Vagina (tissue), 2 donors: ENCODE measurements at regions of chr1 and their contacts with region 1.

Region 1: GRCh38 chr1:24847995-24848881 is 81.8 kb downstream of the RUNX3 start:
- DNase-seq: peak in 1 of 2 donors; percentile 92
- H3K4me3 ChIP-seq: peak overlapping the region; percentile 47 to 57
- H3K27ac ChIP-seq: peak overlapping the region; percentile 71
- H3K4me1 ChIP-seq: peaks cover 18% of the 10 kb centered on the region
- H3K27me3 ChIP-seq: no peaks in the 10 kb centered on the region
- CTCF ChIP-seq: peak; percentile 91 to 95 (median 92)
- POLR2A ChIP-seq: peak in 1 of 2 donors; percentile 47

Region 2: DNA sequence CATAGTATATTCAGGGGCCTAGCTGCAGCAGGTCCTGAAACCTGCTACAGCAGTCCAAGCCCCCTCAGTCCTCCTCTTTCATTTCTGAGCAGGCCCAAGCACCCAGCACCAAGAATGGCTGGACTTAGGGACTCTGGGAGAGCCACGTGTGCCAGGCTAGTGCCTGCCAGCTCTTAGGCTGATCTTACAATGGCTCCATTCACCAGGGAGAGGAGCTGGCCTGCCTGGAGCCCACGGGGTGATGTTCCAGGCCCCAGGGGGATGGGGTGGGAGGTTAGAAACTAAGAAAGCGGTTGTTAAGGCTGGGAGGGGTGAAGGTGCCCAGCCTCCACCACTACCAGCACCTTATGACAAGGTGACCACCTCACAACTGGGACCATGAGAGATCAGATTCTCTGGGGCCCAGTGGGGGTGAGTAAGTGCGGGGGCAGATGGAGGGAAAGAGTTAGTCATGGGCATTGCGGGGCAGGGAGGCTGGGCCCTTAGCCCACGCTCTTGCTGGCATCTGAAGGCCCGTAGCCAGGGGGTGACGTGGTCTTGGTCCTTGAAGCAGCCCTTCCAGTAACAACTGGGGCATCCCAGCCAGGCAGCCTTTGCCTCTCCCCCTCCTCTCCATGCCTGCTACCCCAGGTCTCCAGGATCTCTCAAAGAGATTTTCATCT is 133.2 kb before region 1 on chr1:
- intact Hi-C with region 1: no loop called
- DNase-seq: no peak
- H3K4me3 ChIP-seq: no peak overlapping the region
- H3K27ac ChIP-seq: no peak overlapping the region
- H3K4me1 ChIP-seq: peaks cover 14% of the 10 kb centered on the region
- H3K27me3 ChIP-seq: no peaks in the 10 kb centered on the region
- CTCF ChIP-seq: no peak
- POLR2A ChIP-seq: no peak

Region 3: GRCh38 chr1:25080294-25081209 is 232.3 kb after region 1 on chr1:
- intact Hi-C with region 1: loop called (anchors 10 kb)
- DNase-seq: no peak
- H3K4me3 ChIP-seq: no peak overlapping the region
- H3K27ac ChIP-seq: no peak overlapping the region
- H3K4me1 ChIP-seq: no peaks in the 10 kb centered on the region
- H3K27me3 ChIP-seq: no peaks in the 10 kb centered on the region
- CTCF ChIP-seq: no peak
- POLR2A ChIP-seq: no peak

Region 4: DNA sequence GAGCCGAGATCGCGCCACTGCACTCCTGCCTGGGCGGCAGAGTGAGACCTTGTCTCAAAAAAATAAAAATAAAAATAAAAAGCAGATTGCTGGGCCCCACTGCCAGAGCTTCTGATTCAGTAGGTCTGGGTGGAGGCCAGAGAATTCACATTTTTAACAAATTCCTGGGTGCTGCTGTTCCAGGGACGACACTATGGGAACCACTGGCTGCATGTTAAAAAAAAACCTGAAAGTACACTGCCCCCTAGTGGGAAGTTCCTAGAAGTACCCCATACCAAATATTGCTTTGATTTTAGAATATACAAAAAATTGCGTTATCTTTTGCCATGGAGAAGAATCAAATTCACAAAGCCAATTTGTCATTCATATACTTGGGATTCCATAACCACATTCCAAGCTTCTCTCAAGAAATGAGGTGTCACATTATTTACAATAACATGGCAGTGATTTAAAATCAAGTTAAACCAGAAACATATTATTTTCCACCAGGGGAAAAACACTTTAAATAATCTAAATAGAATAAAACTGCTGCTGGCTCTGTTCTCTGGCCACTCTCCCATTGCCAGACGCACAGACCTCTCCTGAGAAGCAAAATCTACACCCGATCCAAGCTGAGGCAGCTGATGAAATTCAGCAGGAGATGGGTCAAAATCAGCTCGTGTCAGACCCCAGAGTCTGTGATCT is 356.7 kb after region 1 on chr1:
- intact Hi-C with region 1: loop called (anchors 10 kb)
- DNase-seq: no peak
- H3K4me3 ChIP-seq: no peak overlapping the region
- H3K27ac ChIP-seq: no peak overlapping the region
- H3K4me1 ChIP-seq: no peaks in the 10 kb centered on the region
- H3K27me3 ChIP-seq: no peaks in the 10 kb centered on the region
- CTCF ChIP-seq: peak; percentile 48 to 66 (median 53)
- POLR2A ChIP-seq: no peak